H1 (cell line): ENCODE measurements at regions of chr19 and their contacts with region 1.

Region 1: DNA sequence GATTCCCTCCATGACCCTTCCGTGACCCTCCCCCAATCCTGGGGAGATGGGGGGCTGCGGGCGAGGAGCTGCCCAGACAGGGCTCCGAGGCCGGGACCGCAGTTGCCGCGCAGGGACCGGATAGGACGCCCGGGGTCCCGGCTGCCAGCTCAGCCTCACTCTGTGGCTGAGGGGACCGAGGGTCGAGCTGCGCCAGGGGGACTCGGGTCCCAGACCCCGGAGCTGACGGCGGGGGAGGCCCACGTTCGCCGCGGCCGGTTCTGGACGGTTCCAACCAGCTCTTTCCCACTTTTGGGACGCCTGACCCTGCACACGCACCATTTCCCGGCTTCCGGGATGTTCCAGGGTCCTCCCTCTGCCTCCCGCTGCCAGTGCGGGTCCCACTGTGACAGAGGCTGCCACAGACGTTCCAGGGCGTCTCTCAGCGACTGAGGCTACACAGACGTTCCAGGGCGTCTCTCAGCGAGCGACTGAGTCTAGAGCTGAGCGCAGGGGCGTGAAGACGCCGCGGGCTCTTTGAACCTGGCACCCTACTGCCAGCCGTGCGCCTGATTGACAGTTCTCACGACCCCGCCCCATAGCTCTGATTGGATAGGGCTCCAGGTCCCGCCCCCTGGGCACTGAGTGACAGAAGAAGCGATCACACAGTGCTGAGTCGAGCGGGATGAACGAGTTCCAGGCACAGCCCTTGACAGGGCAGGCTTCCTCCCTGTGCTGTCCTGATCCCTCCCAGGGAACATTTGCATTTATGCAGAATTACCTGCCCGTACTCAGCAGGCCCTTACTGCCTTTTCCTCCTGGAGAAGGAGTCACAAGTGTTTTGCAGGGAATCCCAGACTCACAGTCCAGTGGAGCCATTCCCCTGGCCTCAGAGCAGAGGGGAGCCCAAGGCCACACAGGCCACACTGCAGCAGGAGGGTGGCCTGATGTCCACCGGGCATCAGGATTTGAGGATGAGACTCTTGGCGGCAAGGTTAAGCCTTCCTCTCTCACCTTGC is at the start of gene ZNF563:
- DNase-seq: peak; percentile 93 to 98
- H3K4me3 ChIP-seq: peak within 1 kb of the TSS; percentile 49 to 89 (median 82)
- H3K27ac ChIP-seq: peak within 1 kb of the TSS; percentile 34; the same call in 1 of the 2 replicates
- H3K4me1 ChIP-seq: peaks cover 0 to 5% (median 3%) of the 10 kb centered on the region in 4 experiments; a peak in 3 of 7 replicates
- H3K27me3 ChIP-seq: peaks cover 0 to 11% (median 7%) of the 10 kb centered on the region in 4 experiments; a peak in 4 of 7 replicates
- CTCF ChIP-seq: 0 out of 4 replicates have a peak, but pooled peaks of 1 of the 3 experiments have one; percentile 2
- EP300 ChIP-seq: no peak
- POLR2A ChIP-seq: peak in 1 of 2 experiments; percentile 63; a peak in 2 of 3 replicates
- RAD21 ChIP-seq: no peak
- total RNA-seq, gene ZNF563: 2.3 and 3.0 TPM in 2 replicates

Region 2: DNA sequence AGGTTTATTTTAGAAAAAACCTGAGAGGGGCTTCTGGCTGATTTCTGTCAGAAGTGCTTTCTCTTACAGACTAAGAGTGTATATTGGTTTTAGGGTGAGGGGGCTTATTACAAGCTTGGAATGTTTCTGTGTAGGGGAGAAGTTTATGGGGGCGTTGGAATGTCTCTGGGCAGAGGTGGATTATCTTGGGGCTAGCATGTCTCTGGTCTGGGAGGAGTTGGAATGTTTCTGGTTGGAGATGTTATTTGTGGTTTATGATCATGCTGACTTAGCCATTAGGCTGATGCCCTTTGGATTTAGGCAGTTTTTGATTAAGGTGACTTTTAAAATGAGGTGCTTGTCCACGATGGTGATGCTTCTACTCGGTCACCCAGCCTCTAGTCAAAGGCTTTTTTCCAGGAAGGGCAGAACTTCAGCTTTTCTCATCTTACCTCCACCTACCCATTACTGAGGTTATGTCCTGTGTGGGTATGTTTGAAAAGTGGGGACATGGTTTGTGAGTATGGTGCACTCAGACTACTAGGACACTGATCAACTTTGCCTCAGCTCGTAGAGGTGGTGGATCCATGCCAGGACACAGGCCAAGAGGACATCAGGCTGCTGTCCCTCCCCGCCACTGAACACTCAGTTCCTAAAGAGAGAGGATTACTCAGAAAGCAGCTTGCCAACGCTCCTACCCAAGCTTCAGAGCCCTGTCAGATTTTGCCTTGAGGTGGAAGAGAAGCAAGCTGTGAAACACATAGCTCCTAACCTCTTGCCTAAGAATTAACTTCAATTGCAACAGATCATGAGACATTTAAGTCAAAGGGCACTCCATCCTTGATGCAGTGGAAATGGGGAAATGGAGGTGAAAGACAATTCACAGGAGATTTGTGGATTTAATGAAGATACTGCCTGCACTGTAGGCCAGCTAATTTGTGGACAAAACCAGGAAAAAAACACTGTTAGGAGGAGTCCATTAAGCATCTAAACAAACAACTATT is 102.4 kb before region 1 on chr19:
- CTCF ChIA-PET with region 1: no interaction called
- POLR2A ChIA-PET with region 1: no interaction called
- DNase-seq: no peak
- H3K4me3 ChIP-seq: no peak overlapping the region
- H3K27ac ChIP-seq: no peak overlapping the region
- H3K4me1 ChIP-seq: no peaks in the 10 kb centered on the region
- H3K27me3 ChIP-seq: no peaks in the 10 kb centered on the region
- CTCF ChIP-seq: no peak
- EP300 ChIP-seq: no peak
- POLR2A ChIP-seq: no peak
- RAD21 ChIP-seq: no peak

Region 3: DNA sequence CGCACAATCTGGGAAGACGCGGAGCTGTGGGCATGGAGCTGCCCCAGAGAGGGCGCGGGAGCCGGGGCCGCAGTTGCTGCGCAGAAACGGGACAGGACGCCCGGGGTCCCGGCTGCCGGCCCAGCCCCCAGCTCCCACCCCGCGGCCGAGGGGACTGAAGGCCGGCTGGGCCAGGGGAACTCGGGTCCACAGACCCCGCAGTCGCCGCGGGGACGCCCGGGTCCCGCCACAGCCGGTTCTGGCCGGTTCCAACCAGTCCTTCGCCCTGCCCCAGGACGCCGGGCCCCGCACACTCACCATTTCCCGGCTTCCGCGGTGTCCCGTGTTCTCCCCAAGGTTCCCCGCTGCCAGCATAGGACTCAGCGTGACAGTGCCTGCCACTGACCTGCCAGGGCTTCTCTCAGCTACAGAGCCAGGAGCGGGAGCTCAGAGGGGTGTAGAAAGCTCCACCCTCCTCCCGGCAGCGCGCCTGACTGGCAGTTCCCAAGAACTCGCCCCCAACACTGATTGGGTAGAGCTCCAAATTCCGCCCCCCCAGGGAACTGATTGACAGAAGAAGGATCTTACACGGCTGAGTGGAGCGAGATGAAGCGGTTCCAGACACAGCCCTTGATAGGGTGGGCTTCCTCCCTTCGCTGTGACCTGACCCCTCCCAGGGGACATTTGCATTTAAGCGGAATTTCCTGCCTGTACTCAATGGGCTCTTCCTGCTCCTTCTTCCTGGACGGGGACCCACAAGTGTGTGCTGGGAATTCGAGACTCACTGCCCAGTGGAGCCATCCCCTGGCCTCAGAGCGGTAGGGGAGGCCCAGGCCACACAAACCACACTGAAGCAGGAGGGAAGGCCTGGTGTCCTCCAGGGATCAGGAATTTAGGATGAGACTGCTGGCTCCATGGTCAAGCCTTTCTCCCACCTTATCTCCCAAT is 32.0 kb after region 1 on chr19 and contains the start of gene ZNF442:
- CTCF ChIA-PET with region 1: interaction called, 9 read pairs
- POLR2A ChIA-PET with region 1: interaction called, 10 read pairs
- DNase-seq: peak; percentile 91 to 94
- H3K4me3 ChIP-seq: peak within 1 kb of the TSS; percentile 61 to 83 (median 80)
- H3K27ac ChIP-seq: peak within 1 kb of the TSS; percentile 42; the same call in 1 of the 2 replicates
- H3K4me1 ChIP-seq: no peaks in the 10 kb centered on the region
- H3K27me3 ChIP-seq: peaks cover 0 to 8% (median 6%) of the 10 kb centered on the region in 4 experiments; a peak in 5 of 7 replicates
- CTCF ChIP-seq: peak; percentile 40 to 76 (median 75)
- EP300 ChIP-seq: no peak
- POLR2A ChIP-seq: peak; percentile 74 to 88
- RAD21 ChIP-seq: peak; percentile 64 to 71; a peak in 3 of 4 replicates
- total RNA-seq, gene ZNF442: 2.0 and 2.4 TPM in 2 replicates